ENCODE measurements at regions of chr9 and their contacts with region 1.

Region 1: DNA sequence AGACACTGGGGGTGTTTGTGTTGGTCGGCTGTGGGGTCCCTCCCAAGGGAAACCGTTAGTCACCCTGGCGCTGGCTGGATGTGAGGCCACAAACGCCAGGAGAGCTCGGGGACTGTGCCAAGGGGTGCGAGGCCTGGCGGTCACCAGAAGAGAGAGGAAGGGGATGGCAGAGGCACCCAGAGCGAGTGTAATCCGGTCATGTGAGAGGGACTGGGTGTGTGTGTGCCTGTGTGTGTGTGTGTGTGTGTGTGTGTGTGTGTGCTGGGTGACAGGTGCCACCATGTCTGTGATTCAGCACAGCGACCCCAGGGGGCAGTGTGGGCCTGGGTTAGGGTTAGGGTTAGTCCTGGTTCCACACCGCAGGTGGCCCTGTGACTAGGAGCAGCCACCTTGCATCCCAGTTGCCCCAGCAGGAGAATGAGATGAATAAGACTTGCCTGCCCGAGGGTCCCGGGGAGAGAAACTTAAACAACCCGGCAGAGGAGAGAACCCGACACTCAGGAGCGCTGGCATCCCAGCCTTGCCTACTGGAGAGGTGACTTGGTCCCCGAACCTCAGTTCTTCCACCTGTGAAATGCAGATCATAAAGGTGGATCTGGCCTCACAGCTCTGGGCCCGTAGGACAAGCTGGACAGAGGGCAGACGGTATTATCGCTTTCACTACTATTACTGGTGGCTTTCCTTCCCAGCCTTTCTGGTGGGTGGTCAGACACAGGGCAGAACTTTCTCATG is 1.4 kb upstream of the ADAMTSL2 start:
- DNase-seq: no peak
- ATAC-seq: peak; percentile 42

Region 2: GRCh38 chr9:133060417-133060841 is 472.7 kb before region 1 on chr9:
- intact Hi-C with region 1: no loop called
- DNase-seq: no peak
- ATAC-seq: no peak

Region 3: DNA sequence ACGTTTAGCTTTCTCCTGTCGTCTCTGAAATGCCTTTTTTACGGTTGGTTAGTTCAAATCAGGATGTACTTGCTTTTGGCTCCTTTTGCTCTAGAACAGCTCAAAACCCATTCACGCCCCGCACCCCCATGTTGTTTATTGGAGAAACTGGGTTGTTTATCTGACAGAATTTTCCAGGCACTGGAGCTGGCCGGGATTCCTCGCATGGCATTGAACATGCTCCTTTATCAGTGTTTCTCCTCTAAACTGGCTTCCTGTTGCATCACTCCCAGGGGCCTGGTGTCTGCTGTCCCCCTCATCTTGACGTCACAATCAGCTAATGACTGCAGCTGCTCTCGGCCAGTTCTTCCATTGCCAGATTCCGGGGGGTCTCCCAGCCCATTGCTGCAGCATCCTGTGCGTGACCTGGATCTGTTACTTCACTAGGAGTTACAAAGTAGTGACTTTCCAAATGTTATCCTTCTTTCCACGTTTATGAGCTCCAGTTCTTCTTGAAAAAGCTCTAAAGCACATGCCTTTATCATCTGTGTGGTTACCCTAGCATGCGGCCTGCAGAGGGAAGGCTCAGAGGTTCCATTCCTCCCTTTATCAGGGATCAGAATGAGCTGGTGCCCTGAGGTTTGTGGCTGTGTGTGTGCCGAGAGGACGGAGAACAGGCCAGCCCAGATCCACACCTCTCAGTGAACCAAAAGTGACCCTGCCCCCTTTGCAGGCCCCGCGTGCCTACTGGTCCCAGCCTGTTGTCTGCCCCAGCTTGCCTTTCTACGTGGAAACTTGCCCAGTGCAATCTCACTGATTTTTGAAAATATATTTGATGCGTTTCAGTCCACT is 48.6 kb after region 1 on chr9:
- intact Hi-C with region 1: loop called (anchors 2 kb)
- DNase-seq: peak; percentile 89
- ATAC-seq: peak; percentile 55

Region 4: GRCh38 chr9:133803028-133803585 is 270.0 kb after region 1 on chr9:
- intact Hi-C with region 1: no loop called
- DNase-seq: no peak
- ATAC-seq: no peak

Measured in Right ventricle myocardium inferior (tissue), 1 donor.